ENCODE measurements at regions of chr3 and their contacts with region 1.

Region 1: DNA sequence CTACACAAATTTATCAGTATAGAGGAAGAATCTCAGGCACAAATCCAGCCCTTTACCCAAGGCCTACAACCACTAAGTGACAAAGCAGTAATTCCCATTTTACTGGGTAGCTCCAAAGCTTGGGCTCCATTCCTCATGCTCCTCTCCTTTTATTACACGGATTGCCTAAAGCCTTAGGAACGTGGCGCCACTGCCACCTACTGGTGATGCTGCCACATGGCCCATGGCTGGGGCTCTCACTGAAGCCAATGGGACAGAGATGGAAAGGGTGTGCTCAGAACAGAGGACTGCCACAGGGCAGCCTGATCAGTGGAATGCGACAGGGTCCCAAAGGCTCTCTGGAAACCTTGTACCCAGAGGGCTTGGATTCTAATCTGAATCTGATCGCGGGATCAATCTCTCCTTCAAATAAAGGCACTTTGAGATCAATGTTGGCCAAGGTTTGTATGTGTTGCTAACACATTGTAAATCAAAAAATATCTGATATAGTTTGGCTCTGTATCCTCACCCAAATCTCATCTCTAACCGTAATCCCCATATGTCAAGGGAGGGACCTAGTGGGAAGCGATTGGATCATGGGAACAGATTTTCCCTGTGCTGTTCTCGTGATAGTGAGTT is 33.5 kb upstream of the LYZL4 start:
- DNase-seq: peak; percentile 81

Region 2: DNA sequence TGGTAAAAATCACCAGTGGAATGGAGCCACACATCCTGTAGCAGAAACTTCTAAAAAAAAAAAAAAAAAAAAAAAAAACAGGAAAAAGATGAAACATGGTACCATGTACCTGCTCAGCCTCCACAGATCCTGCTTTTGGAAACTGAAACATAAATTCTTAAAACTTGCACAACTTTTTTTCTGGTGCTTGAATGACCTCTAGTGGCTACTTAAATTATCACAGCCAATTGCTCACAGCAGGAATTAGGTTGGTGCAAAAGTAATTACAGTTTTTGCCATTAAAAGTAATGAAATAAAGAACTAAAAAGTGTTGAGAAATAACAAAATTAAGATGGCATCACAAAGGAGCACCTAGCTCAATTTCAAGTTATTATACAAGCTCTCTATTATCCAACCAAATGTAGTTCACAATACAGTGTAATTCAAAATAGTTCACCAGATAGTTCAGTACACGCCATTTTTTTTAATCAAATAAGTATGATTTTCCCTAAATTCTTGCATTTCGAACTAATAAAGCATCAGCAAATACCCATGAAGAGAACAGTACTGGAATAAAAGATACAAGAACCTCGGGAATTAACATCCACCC is 562.6 kb before region 1 on chr3:
- in situ Hi-C with region 1: loop called (anchors 25 kb)
- DNase-seq: peak; percentile 68

Region 3: DNA sequence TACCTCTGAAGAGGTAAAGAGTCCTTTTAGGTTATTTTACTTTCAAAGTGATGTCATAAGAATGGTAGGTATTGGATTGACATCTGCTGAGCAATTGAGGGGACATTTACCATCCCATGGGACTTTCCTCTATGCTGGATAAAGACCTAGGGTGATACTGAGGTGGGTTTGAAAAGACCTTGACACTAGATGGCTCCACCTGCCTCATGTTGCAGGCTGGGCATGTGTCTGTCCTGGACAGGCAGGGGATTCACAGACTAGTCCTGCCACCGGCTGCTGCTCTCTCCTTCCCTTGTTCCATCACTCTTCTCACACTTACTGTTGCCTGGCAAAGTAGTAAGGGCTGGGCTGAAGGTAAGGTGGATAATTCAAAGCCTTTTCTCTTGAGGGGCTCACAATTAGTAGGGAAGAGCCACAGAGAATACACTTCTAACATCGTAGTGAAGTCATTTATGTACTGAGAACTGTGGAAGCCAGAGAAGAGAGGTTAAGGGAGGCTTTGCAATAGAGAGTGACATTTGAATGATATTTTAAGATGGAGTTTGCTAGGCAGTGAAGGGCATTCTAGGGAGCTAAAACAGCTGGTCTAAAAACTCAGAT is 325.1 kb before region 1 on chr3:
- in situ Hi-C with region 1: loop called (anchors 25 kb)
- DNase-seq: peak; percentile 67

Region 4: GRCh38 chr3:42166662-42167300 is 277.1 kb before region 1 on chr3:
- in situ Hi-C with region 1: no loop called
- DNase-seq: no peak

Region 5: GRCh38 chr3:42247576-42248027 is 196.3 kb before region 1 on chr3:
- in situ Hi-C with region 1: loop called (anchors 25 kb)
- DNase-seq: peak; percentile 72

Region 6: DNA sequence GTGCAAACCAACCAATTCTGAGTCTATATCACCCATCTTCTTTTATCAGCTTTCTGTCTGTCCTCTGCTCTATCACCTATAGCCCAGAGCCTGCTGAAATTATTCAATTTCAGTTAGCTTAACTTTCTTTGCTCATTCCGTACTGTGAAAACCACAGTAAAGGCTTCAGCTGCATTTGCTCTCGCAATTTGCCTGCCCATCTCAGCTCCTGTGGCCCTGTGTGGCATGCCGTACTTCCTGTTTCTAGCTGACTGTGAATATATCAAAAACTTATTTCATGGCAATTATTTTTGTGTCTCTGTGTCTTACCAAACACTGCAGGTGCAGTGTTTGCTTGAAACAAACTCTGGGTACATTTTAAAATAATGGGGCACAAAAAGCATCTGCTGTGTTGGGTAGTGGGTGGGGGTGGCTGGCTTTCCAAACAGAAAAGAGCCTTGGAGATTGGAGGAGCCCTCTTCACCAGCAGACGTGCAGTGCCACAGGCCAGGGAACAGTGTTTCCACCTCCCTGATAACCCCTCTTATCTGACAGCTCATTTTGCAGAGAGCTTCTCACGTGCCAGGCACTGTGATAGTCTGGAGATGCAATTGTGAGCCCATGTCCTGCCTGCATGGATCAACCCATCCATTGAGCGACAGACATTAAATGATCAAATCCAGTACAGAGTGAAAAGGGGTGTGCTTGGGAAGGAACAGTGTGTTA is 580.4 kb after region 1 on chr3:
- in situ Hi-C with region 1: no loop called
- DNase-seq: peak; percentile 65

Measured in KBM-7 (cell line).